Head of caudate nucleus (tissue), 42 donors: ENCODE measurements at regions of chr6 and their contacts with region 1.

Region 1: DNA sequence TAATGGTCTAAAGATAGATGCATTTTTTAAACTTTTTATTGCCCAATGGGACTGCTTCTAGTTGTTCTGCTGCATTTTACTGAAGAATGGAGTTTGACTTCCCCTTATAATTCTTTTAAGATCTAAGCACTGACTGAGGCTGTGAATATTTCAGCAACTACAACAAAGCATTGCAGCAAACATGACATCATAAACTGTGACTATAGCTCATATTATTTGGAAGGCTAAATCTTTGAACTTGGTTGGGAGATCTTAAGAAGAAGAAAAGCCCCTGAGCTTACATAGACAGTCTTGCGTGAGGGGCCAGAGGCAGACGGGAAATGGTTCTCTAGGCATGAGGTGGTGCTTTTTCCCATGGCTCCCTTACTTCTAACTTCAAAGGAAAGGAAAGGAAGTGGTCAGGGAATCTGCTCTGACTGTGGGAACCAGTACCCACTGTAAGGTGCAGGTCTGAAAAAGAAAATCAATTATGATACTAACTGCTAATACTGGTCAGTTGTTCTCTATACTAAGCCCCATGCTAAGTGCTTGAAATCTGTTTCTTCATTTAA is 14.8 kb downstream of the HEY2 start:
- DNase-seq: no peak

Region 2: GRCh38 chr6:124870611-124871459 is 893.4 kb before region 1 on chr6:
- intact Hi-C with region 1: loop called (anchors 10 kb)
- DNase-seq: peak in 6 of 42 donors; percentile 13 to 44 (median 17)

Region 3: DNA sequence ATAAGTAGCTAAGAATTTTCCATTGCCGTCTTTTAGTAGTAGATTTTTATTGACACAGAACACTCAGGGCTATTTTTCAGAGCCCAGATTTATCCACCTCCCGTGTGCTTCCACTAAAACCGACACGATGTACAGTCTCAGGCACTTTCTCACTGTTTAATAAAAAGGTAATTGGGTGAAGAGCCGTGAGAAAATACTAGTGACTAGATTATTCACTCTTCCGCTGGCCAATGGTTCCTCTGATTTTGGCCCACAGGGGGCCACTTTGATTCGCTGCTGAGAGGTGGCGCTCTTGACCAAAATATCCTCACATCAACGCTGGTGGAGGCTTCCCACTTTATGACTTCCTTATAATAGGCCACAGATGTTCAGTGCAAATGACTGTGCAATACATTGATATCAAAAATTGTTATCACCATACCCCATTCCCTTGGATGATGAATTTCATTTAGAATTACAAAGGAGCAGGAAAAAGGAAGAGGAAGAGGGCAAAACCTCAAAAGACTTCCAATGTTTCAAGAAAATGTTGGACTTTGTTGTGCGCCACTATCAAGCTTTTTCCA is 450.1 kb before region 1 on chr6:
- intact Hi-C with region 1: loop called (anchors 5 kb)
- DNase-seq: peak; percentile 29 to 91 (median 70)

Region 4: GRCh38 chr6:125528621-125529041 is 235.6 kb before region 1 on chr6:
- intact Hi-C with region 1: loop called (anchors 10 kb)
- DNase-seq: no peak

Region 5: GRCh38 chr6:125584468-125585029 is 179.6 kb before region 1 on chr6:
- intact Hi-C with region 1: loop called (anchors 10 kb)
- DNase-seq: peak; percentile 52 to 92 (median 80)